ENCODE measurements at regions of chr14 and their contacts with region 1.

Region 1: GRCh38 chr14:58244556-58245387 is at the start of gene PSMA3:
- DNase-seq: peak; percentile 96 to 97 (median 97)
- H3K4me3 ChIP-seq: peak within 1 kb of the TSS; percentile 76 to 100 (median 96)
- H3K4me3 Mint-ChIP-seq: peak within 1 kb of the TSS; percentile 96 to 99
- H3K27ac ChIP-seq: peak within 1 kb of the TSS; percentile 92 to 100
- H3K27ac Mint-ChIP-seq: peak within 1 kb of the TSS; percentile 98 to 100 (median 99)
- H3K4me1 ChIP-seq: peaks cover 4 to 27% of the 10 kb centered on the region in 2 donors
- H3K4me1 Mint-ChIP-seq: peaks cover 31% of the 10 kb centered on the region
- H3K27me3 ChIP-seq: no peaks in the 10 kb centered on the region
- H3K27me3 Mint-ChIP-seq: no peaks in the 10 kb centered on the region
- CTCF ChIP-seq: no peak
- polyA plus RNA-seq, gene PSMA3: 59.9 to 170 (median 147) TPM

Region 2: DNA sequence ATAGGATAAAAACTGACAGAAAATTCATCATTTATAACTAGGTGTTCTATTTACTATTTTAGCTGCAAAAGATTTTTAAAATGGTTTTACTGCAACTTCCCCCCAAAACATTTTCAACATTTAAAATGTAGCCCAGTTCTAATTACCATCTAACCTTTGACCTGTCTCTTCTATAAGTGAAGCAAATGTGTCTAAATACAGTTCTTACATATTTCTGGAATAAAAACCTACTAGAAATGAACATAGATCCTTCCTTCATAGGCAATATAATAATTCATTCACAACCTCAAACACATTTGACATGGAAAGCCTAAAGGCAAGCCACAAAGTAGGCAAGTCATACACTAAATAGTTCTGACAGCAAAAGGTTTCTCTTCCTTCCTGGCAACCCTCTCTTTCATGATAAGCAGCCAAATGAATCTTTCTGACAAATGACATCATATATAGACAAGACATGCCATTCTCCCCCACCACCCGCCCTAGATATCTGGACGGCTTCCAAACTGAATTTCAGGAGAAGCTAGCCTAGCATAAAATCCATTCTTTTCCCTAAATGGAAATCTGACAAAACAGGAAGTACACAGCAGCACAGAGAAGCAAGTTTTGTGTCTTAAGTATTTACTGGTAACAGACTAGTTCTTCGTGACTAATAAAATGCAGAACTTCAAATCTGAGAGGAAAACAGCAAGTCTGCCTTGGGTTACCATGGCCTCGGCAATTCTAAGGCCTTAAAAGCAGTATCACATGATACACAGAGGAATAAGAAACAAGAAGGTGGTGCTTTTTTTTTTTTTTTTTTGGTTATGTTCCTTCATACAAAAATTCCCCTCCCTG is 36.4 kb after region 1 on chr14:
- intact Hi-C with region 1: loop called in 1 of 2 experiments (anchors 5 kb)
- DNase-seq: peak; percentile 84 to 96 (median 94)
- H3K4me3 ChIP-seq: peak overlapping the region in 2 of 3 experiments; percentile 25 to 55
- H3K4me3 Mint-ChIP-seq: peak overlapping the region; percentile 42 to 59
- H3K27ac ChIP-seq: peak overlapping the region; percentile 83 to 95
- H3K27ac Mint-ChIP-seq: peak overlapping the region; percentile 93 to 97 (median 96)
- H3K4me1 ChIP-seq: peaks cover 18 to 25% of the 10 kb centered on the region in 2 donors
- H3K4me1 Mint-ChIP-seq: peaks cover 29% of the 10 kb centered on the region
- H3K27me3 ChIP-seq: no peaks in the 10 kb centered on the region
- H3K27me3 Mint-ChIP-seq: no peaks in the 10 kb centered on the region
- CTCF ChIP-seq: no peak

Region 3: DNA sequence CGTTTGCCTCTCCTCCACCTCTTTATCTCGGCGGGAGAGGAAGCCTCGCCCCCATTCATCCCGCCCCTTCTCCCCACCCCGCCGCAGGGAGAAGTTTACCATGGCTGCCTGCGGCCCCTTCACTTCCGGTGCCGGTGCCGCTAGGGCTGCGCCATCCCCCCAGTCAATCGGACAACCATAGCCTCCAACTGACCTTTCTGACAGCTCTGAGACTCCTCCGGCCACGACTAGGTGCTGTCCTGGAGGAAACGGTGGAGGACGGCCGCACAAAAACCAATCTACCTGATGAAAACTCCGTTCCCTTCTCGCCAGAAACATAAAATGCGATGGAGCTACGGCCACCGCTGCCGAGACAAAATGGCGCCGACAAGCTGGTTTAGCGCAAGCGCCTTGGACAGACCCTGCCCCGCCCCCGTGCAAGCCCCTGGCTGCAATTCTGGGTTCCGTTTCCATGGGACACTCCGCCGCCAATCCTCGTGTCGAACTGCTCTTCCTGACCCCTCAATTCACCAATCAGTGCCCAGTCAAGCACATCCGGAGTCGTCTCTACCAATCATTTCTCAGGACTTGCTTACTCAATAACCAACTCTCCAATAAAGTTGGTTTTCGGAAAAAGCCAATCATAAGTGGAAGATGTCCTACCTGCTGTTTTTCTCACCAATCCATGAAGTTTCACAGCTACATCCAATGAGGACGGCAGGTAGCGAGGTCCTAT is 53.1 kb after region 1 on chr14:
- intact Hi-C with region 1: loop called (anchors 2 to 5 kb)
- DNase-seq: peak; percentile 100
- H3K4me3 ChIP-seq: peak overlapping the region; percentile 86 to 97 (median 95)
- H3K4me3 Mint-ChIP-seq: no peak overlapping the region
- H3K27ac ChIP-seq: peak overlapping the region; percentile 90
- H3K27ac Mint-ChIP-seq: no peak overlapping the region
- H3K4me1 ChIP-seq: peaks cover 14 to 32% of the 10 kb centered on the region in 2 donors
- H3K4me1 Mint-ChIP-seq: peaks cover 32% of the 10 kb centered on the region
- H3K27me3 ChIP-seq: no peaks in the 10 kb centered on the region
- H3K27me3 Mint-ChIP-seq: no peaks in the 10 kb centered on the region
- CTCF ChIP-seq: no peak

Region 4: GRCh38 chr14:58427281-58428117 is 182.7 kb after region 1 on chr14 and contains the starts of genes KIAA0586 and TIMM9:
- intact Hi-C with region 1: loop called in 1 of 2 experiments (anchors 10 kb)
- DNase-seq: peak; percentile 96 to 98 (median 98)
- H3K4me3 ChIP-seq: peak within 1 kb of the TSS; percentile 91 to 96 (median 96)
- H3K4me3 Mint-ChIP-seq: peak within 1 kb of the TSS; percentile 87 to 96
- H3K27ac ChIP-seq: peak within 1 kb of the TSS; percentile 70 to 99
- H3K27ac Mint-ChIP-seq: peak within 1 kb of the TSS; percentile 95 to 99 (median 98)
- H3K4me1 ChIP-seq: peaks cover 17% of the 10 kb centered on the region in 2 donors
- H3K4me1 Mint-ChIP-seq: peaks cover 16% of the 10 kb centered on the region
- H3K27me3 ChIP-seq: no peaks in the 10 kb centered on the region
- H3K27me3 Mint-ChIP-seq: no peaks in the 10 kb centered on the region
- CTCF ChIP-seq: no peak
- polyA plus RNA-seq, gene KIAA0586: 3.4 to 7.5 (median 4.4) TPM
- polyA plus RNA-seq, gene TIMM9: 26.2 to 45.7 (median 29.9) TPM

Region 5: DNA sequence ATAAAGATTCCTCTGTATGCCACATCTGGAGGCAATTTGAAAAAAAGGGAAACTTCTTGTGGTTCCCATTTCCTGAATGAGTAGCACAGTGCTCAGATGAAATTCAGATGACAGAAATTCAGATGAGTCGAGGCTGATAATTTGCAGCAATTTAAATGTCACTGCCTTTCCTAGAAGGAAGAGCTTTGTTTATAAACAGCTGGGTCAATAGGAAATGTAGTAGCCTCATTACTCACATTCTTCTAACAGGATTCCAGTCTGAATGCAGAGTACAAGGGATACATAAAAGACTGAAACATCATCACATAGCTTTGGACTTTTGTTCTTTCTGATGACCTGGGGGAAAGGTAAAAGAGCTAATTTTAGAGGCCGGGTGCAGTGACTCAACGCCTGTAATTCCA is 381.7 kb after region 1 on chr14:
- intact Hi-C with region 1: no loop called
- DNase-seq: no peak
- H3K4me3 ChIP-seq: no peak overlapping the region
- H3K4me3 Mint-ChIP-seq: no peak overlapping the region
- H3K27ac ChIP-seq: no peak overlapping the region
- H3K27ac Mint-ChIP-seq: no peak overlapping the region
- H3K4me1 ChIP-seq: peaks cover 0 to 3% of the 10 kb centered on the region in 2 donors
- H3K4me1 Mint-ChIP-seq: peaks cover 3% of the 10 kb centered on the region
- H3K27me3 ChIP-seq: no peaks in the 10 kb centered on the region
- H3K27me3 Mint-ChIP-seq: peaks cover 0 to 2% (median 0%) of the 10 kb centered on the region in 3 donors
- CTCF ChIP-seq: no peak

Measured in CD14-positive monocyte (primary cell).